ENCODE measurements at regions of chr5 and their contacts with region 1.

Region 1: GRCh38 chr5:62779010-62779422 is 200.4 kb downstream of the LRRC70 start:
- DNase-seq: peak in 1 of 2 donors; percentile 24
- ATAC-seq: peak in 7 of 8 donors; percentile 69 to 86 (median 82)
- H3K4me3 ChIP-seq: no peak overlapping the region
- H3K27ac ChIP-seq: no peak overlapping the region
- H3K4me1 ChIP-seq: peaks cover 0 to 12% (median 0%) of the 10 kb centered on the region in 9 donors
- H3K27me3 ChIP-seq: no peaks in the 10 kb centered on the region
- CTCF ChIP-seq: peak; percentile 52 to 85 (median 77)

Region 2: DNA sequence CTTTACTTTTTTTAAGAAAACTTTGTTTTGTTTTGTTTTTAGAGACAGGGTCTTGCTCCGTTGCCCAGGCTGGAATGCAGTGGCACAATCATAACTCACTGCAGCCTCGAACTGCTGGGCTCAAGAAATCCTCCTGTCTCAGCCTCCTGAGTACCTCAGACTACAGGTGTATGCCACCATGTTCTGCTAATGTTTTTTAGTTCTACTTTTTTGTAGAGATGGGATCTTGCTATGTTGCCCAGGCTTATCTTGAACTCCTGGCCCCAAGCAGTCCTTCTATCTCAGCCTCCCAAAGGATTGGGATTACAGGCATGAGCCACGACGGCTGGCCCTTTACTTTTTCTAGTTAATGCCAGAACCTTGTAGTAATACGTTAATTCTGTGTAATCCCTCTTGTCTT is 330.5 kb before region 1 on chr5:
- intact Hi-C with region 1: loop called in 1 of 10 experiments (anchors 5 kb)
- DNase-seq: no peak
- ATAC-seq: no peak
- H3K4me3 ChIP-seq: no peak overlapping the region
- H3K27ac ChIP-seq: no peak overlapping the region
- H3K4me1 ChIP-seq: no peaks in the 10 kb centered on the region
- H3K27me3 ChIP-seq: no peaks in the 10 kb centered on the region
- CTCF ChIP-seq: no peak

Region 3: GRCh38 chr5:62460578-62460983 is 318.4 kb before region 1 on chr5:
- intact Hi-C with region 1: loop called (anchors 2 to 10 kb)
- DNase-seq: no peak
- ATAC-seq: peak in 5 of 8 donors; percentile 43 to 69 (median 53)
- H3K4me3 ChIP-seq: no peak overlapping the region
- H3K27ac ChIP-seq: no peak overlapping the region
- H3K4me1 ChIP-seq: peaks cover 0 to 3% (median 0%) of the 10 kb centered on the region in 9 donors
- H3K27me3 ChIP-seq: no peaks in the 10 kb centered on the region
- CTCF ChIP-seq: peak; percentile 55 to 91 (median 83)

Region 4: DNA sequence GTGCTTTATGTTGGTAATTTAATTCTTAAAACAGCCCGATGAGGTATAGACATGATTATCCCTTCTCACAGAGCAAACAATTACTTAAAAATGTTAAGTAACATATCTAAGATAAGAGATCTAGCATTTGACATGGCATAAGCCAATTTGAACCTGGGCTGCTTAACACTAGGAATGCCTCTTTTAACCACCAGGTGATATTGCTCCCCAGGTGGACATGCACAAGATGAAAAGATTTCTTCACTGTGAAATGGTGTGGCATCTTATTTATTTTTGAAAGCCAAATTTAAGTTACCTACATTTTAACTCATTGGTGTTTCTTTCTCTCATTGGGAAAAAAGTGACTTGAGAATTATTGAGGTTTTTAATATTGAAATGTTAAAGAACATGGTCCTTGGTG is 216.1 kb before region 1 on chr5:
- intact Hi-C with region 1: loop called in 1 of 10 experiments (anchors 5 kb)
- DNase-seq: no peak
- ATAC-seq: no peak
- H3K4me3 ChIP-seq: no peak overlapping the region
- H3K27ac ChIP-seq: no peak overlapping the region
- H3K4me1 ChIP-seq: no peaks in the 10 kb centered on the region
- H3K27me3 ChIP-seq: no peaks in the 10 kb centered on the region
- CTCF ChIP-seq: no peak